ENCODE measurements at regions of chr5 and their contacts with region 1.

Region 1: GRCh38 chr5:14142827-14143548 is at the start of gene TRIO:
- DNase-seq: peak; percentile 89
- ATAC-seq: peak; percentile 54
- H3K4me3 Mint-ChIP-seq: peak within 1 kb of the TSS; percentile 89
- H3K27ac Mint-ChIP-seq: peak within 1 kb of the TSS; percentile 94
- H3K4me1 Mint-ChIP-seq: peaks cover 37% of the 10 kb centered on the region
- H3K27me3 Mint-ChIP-seq: peaks cover 2% of the 10 kb centered on the region
- CTCF ChIP-seq: no peak
- total RNA-seq, gene TRIO: 191 and 223 TPM in 2 replicates

Region 2: DNA sequence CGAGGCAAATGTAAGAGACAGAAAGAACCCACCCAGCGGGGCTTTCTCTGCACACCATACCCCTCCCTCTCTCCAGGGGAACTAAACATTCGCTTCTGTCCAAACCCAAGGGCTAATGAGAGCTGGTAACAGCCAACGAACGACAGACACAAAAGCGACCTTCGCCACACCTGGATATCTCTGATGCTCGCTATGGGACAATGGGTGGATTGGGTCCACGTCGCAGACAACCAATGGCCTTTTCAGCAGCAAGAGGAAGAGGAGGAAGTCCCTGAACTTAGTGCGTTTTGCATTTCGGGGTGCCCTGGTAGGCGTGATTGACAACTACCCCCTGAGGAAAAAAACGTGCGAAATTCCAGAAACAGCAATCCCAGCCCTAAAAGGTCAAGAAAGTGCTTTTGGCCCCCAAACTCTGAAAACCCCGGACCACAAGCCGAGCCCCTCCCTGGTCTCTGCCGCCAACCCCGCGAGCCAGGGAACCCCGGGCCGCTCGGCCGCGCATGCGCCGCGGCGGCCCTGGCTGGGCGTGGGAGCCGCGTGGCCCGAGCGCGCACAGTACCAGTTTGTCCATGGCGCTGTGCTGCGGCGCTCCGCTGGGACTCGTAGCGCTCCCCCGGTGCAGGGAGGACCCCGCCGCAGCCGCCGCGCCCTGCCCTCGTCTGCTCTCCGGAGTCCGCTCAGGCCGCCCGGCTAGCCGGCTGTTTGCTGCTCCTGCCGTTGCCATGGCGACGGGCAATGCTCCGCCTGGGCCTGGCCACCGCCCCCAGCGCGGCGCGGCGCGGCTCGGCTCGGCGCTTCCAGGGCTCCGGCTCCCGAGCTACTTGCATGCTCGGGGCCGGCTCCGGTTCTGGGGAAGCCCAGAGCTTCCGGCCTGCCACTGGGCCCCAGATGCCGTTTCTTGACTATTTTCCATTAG is 131.6 kb before region 1 on chr5:
- CTCF ChIA-PET with region 1: no interaction called
- POLR2A ChIA-PET with region 1: no interaction called
- intact Hi-C with region 1: loop called (anchors 1 kb)
- DNase-seq: peak; percentile 72
- ATAC-seq: peak; percentile 89
- H3K4me3 Mint-ChIP-seq: peak overlapping the region; percentile 85
- H3K27ac Mint-ChIP-seq: peak overlapping the region; percentile 73
- H3K4me1 Mint-ChIP-seq: peaks cover 10% of the 10 kb centered on the region
- H3K27me3 Mint-ChIP-seq: peaks cover 20% of the 10 kb centered on the region
- CTCF ChIP-seq: no peak

Region 3: GRCh38 chr5:14156650-14157493 is 13.9 kb after region 1 on chr5:
- CTCF ChIA-PET with region 1: interaction called, 5 read pairs
- POLR2A ChIA-PET with region 1: interaction called, 101 read pairs
- intact Hi-C with region 1: loop called (anchors 1 kb)
- DNase-seq: no peak
- ATAC-seq: peak; percentile 72
- H3K4me3 Mint-ChIP-seq: no peak overlapping the region
- H3K27ac Mint-ChIP-seq: no peak overlapping the region
- H3K4me1 Mint-ChIP-seq: peaks cover 34% of the 10 kb centered on the region
- H3K27me3 Mint-ChIP-seq: no peaks in the 10 kb centered on the region
- CTCF ChIP-seq: no peak

Region 4: DNA sequence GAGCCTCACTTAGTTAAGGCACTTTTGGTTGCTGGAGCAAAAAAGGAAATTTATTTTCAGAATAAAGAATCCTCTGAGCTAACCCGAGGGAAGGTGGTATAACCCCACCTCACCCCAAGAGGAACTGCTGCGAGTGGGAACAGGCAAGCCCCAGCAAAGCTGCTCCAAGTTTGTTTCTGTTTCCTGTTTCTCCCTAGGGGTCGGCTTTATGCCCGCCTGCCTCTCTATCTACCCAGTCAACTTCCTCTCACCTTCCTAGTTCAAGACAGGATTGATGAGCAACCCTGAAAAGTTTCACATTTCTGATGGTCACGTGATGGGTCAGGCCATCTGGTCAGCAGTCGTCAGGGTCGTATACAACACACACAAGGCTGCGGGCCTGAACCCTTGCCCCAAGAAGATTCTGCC is 31.2 kb after region 1 on chr5:
- CTCF ChIA-PET with region 1: interaction called, 3 read pairs
- POLR2A ChIA-PET with region 1: interaction called, 8 read pairs
- intact Hi-C with region 1: loop called (anchors 1 kb)
- DNase-seq: no peak
- ATAC-seq: peak; percentile 68
- H3K4me3 Mint-ChIP-seq: peak overlapping the region; percentile 78
- H3K27ac Mint-ChIP-seq: peak overlapping the region; percentile 93
- H3K4me1 Mint-ChIP-seq: peaks cover 83% of the 10 kb centered on the region
- H3K27me3 Mint-ChIP-seq: no peaks in the 10 kb centered on the region
- CTCF ChIP-seq: no peak

Region 5: GRCh38 chr5:14223372-14223771 is 80.4 kb after region 1 on chr5:
- CTCF ChIA-PET with region 1: no interaction called
- POLR2A ChIA-PET with region 1: no interaction called
- intact Hi-C with region 1: no loop called
- DNase-seq: no peak
- ATAC-seq: no peak
- H3K4me3 Mint-ChIP-seq: peak overlapping the region; percentile 13
- H3K27ac Mint-ChIP-seq: peak overlapping the region; percentile 64
- H3K4me1 Mint-ChIP-seq: peaks cover 95% of the 10 kb centered on the region
- H3K27me3 Mint-ChIP-seq: no peaks in the 10 kb centered on the region
- CTCF ChIP-seq: no peak

Region 6: DNA sequence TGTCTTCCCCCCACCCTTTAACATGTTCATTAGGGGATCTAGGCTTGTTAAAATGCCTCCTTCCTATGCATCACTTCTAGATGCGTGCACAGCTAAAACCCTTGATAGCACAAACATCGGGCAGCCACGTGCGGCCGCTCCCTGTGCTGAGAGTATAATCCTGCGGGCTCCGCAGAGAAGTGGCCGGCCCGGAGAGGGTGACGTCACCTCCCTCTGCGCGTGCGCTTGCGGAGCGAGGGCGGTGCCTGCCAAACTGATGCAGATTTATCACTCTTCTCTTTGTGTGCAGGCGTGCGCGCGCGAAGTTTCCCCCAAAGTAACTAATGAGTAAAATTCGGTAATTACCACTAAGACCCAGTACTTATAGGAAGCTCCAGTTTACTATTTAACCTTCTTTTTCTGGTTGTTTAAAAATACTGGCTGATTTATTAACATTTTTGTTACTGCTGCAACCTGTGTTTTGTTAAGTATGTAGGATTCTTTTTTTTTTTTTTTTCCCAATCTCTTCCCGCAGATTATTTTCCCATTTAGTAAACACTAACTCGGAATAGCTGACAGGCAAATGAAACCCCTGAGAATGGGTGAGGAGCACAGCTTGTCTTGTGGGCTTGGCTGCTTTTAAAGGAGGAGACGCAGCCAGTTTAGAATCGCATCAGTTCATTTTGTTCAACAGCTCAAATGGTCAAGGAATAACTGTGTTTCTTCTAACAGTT is 121.8 kb after region 1 on chr5:
- CTCF ChIA-PET with region 1: interaction called, 18 read pairs
- POLR2A ChIA-PET with region 1: interaction called, 8 read pairs
- intact Hi-C with region 1: loop called (anchors 1 kb)
- DNase-seq: peak; percentile 79
- ATAC-seq: peak; percentile 98
- H3K4me3 Mint-ChIP-seq: peak overlapping the region; percentile 81
- H3K27ac Mint-ChIP-seq: peak overlapping the region; percentile 69
- H3K4me1 Mint-ChIP-seq: peaks cover 78% of the 10 kb centered on the region
- H3K27me3 Mint-ChIP-seq: no peaks in the 10 kb centered on the region
- CTCF ChIP-seq: no peak

Region 7: DNA sequence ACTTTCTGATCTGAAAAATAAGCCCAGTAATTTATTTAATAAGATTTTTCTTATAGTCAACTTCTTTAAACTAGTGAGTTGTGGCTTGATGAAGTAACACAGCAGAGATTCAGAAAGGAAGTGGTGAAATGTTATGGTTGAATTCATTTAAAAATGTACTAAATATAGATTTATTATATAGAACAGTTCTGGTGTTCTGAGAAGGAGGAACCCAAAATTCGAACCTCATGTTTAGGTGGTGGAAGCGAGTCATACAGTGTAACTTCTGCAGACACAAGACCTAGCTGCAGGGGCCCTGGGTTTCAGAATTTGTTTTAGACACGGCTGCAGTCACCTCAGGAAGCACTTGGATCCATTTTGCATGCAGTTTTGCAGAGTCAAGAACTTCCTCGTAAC is 188.4 kb after region 1 on chr5:
- CTCF ChIA-PET with region 1: no interaction called
- POLR2A ChIA-PET with region 1: no interaction called
- intact Hi-C with region 1: loop called (anchors 1 kb)
- DNase-seq: no peak
- ATAC-seq: peak; percentile 92
- H3K4me3 Mint-ChIP-seq: peak overlapping the region; percentile 74
- H3K27ac Mint-ChIP-seq: peak overlapping the region; percentile 89
- H3K4me1 Mint-ChIP-seq: peaks cover 57% of the 10 kb centered on the region
- H3K27me3 Mint-ChIP-seq: no peaks in the 10 kb centered on the region
- CTCF ChIP-seq: no peak